Upper lobe of right lung (tissue), 1 donor: ENCODE measurements at regions of chr20 and their contacts with region 1.

Region 1: GRCh38 chr20:29119141-29119540 is 2138.3 kb upstream of the DEFB115 start:
- DNase-seq: no peak
- ATAC-seq: peak; percentile 58
- H3K4me3 ChIP-seq: no peak overlapping the region
- H3K27ac ChIP-seq: no peak overlapping the region
- H3K4me1 ChIP-seq: no peaks in the 10 kb centered on the region
- H3K27me3 ChIP-seq: no peaks in the 10 kb centered on the region
- CTCF ChIP-seq: no peak

Region 2: DNA sequence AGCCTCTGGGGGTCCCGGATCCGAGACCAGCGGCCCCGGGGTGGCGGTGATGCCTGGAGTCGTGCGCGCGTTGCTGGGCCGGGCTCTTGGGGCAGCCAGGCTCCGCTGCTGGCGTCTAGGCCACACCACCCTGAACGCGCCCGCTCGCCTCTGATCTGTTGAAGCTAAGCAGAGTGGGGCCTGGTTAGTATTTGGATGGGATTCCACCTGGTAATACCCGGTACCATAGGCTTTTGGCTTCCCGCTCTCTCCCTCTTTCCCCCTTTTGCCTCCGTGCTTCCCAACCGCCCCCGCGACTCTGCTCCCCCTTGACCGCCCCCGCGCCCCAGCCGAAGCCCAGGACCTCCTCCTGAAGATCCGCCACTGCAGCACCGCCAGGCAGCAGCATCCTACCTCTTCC is 754.8 kb after region 1 on chr20:
- intact Hi-C with region 1: loop called (anchors 10 kb)
- DNase-seq: peak; percentile 84
- ATAC-seq: peak; percentile 13
- H3K4me3 ChIP-seq: no peak overlapping the region
- H3K27ac ChIP-seq: no peak overlapping the region
- H3K4me1 ChIP-seq: no peaks in the 10 kb centered on the region
- H3K27me3 ChIP-seq: no peaks in the 10 kb centered on the region
- CTCF ChIP-seq: no peak